H1 (cell line): ENCODE measurements at regions of chr1 and their contacts with region 1.

Region 1: GRCh38 chr1:201709564-201710295 is 119.2 kb upstream of the IPO9 start:
- DNase-seq: peak; percentile 50 to 92
- H3K4me3 ChIP-seq: no peak overlapping the region
- H3K27ac ChIP-seq: no peak overlapping the region
- H3K4me1 ChIP-seq: peaks cover 0 to 3% (median 2%) of the 10 kb centered on the region in 4 experiments; a peak in 4 of 7 replicates
- H3K27me3 ChIP-seq: no peaks in the 10 kb centered on the region
- CTCF ChIP-seq: peak; percentile 95 to 97 (median 97)
- EP300 ChIP-seq: no peak
- POLR2A ChIP-seq: no peak
- RAD21 ChIP-seq: peak; percentile 90 to 94

Region 2: DNA sequence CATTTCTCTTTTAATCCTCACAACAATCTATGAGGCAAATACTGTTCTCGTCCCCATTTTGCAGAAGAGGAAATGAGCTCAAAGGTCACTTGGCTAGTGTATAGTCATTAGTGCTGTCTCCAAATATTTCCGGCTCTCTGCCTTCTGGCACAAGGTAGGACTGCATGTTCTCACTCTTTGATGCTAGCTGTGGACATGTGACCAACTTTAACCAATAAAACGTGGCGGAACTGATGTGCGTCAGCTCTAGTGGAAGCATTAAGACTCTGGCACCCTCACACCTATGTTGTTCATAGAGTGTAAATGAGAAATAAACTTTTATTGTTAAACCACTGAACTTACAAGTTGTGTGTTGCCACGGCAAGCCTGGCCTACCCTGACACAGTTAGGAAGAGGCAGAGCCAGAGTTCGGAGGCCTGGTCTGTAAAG is 681.3 kb before region 1 on chr1:
- CTCF ChIA-PET with region 1: no interaction called
- POLR2A ChIA-PET with region 1: no interaction called
- DNase-seq: no peak
- H3K4me3 ChIP-seq: no peak overlapping the region
- H3K27ac ChIP-seq: no peak overlapping the region
- H3K4me1 ChIP-seq: peaks cover 5 to 18% (median 13%) of the 10 kb centered on the region in 4 experiments
- H3K27me3 ChIP-seq: no peaks in the 10 kb centered on the region
- CTCF ChIP-seq: no peak
- EP300 ChIP-seq: no peak
- POLR2A ChIP-seq: no peak
- RAD21 ChIP-seq: no peak

Region 3: DNA sequence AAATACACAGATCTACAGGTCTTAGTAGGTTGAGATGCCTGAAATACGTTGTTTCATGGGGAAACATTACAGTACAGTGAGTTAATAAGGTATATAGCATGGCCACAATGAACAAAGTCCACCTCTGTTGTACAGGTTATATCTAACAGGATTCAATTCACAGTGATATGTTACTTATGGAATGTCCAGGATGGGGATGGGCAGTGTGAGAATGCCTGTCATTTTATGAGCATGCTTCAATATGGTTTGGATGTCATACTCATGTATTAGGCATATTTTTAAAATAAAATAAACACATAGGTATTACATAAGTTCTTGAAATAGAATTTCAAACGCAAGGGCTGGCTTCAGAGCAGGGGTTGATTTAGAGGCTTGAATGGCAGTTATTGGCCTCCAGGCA is 234.6 kb before region 1 on chr1:
- CTCF ChIA-PET with region 1: no interaction called
- POLR2A ChIA-PET with region 1: no interaction called
- DNase-seq: no peak
- H3K4me3 ChIP-seq: no peak overlapping the region
- H3K27ac ChIP-seq: no peak overlapping the region
- H3K4me1 ChIP-seq: peaks cover 0 to 3% (median under 1%) of the 10 kb centered on the region in 4 experiments; a peak in 4 of 7 replicates
- H3K27me3 ChIP-seq: peaks cover 4 to 18% (median 15%) of the 10 kb centered on the region in 4 experiments; a peak in 6 of 7 replicates
- CTCF ChIP-seq: no peak
- EP300 ChIP-seq: no peak
- POLR2A ChIP-seq: no peak
- RAD21 ChIP-seq: no peak

Region 4: DNA sequence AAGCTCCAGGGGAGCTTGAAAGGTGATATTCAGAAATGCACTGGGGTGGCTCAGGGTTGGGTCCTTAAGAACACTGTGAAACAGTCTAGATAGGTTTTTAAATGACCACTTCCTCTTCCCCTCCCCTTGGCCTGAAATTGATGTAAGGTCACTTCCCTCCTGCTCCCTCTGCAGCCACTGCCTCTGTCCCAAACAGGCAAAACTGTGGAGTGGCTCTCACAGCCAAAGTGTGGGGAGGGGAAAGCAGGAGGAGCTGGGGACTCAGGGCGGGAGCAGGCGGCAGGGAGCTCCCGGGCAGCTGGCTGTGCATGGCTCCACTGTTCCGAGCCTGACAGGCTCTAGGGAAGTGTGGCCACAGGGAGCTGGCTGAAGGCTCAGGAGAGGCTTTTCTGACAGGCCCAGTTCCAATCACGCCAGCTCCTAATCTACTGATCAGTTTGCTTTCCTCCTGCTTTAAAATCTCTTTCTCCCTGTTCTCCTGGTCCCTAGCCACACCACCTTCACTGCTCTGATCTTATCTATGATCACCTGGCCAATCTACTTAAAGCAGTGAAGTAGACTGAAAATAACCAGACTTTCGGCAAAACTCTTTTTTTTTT is 197.7 kb before region 1 on chr1:
- CTCF ChIA-PET with region 1: interaction called, 25 read pairs
- POLR2A ChIA-PET with region 1: no interaction called
- DNase-seq: no peak
- H3K4me3 ChIP-seq: no peak overlapping the region
- H3K27ac ChIP-seq: no peak overlapping the region
- H3K4me1 ChIP-seq: peaks cover 3 to 5% (median 5%) of the 10 kb centered on the region in 4 experiments; a peak in 6 of 7 replicates
- H3K27me3 ChIP-seq: peaks cover under 1 to 18% (median 12%) of the 10 kb centered on the region in 4 experiments
- CTCF ChIP-seq: no peak
- EP300 ChIP-seq: no peak
- POLR2A ChIP-seq: no peak
- RAD21 ChIP-seq: no peak

Region 5: GRCh38 chr1:201619513-201619912 is 90.2 kb before region 1 on chr1:
- CTCF ChIA-PET with region 1: interaction called, 11 read pairs
- POLR2A ChIA-PET with region 1: no interaction called
- DNase-seq: no peak
- H3K4me3 ChIP-seq: no peak overlapping the region
- H3K27ac ChIP-seq: no peak overlapping the region
- H3K4me1 ChIP-seq: peaks cover 1 to 8% (median 5%) of the 10 kb centered on the region in 4 experiments; a peak in 4 of 7 replicates
- H3K27me3 ChIP-seq: no peaks in the 10 kb centered on the region
- CTCF ChIP-seq: no peak
- EP300 ChIP-seq: no peak
- POLR2A ChIP-seq: no peak
- RAD21 ChIP-seq: no peak

Region 6: DNA sequence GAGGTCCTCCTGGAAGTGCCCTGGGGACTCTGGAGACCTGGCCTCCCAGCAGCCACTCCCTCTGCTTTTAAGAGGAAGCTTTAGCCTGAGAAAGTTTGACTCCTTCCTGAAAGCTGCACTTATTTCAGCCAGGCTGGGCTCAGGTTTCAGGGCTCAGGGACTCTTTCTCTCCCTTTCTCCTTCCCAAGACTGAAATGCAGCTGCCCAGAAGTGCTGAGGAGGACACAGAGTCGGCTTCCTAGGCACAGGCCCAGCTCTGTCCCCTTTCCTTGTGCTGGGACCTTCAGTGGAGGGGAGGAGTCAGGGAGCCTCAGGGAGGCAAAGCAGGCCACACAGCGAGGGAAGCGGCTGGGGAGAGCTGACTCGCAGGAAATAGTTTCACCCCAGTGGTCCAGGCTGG is 33.5 kb before region 1 on chr1:
- CTCF ChIA-PET with region 1: interaction called, 14 read pairs
- POLR2A ChIA-PET with region 1: interaction called, 3 read pairs
- DNase-seq: no peak
- H3K4me3 ChIP-seq: no peak overlapping the region
- H3K27ac ChIP-seq: peak overlapping the region; percentile 64; the same call in 1 of the 2 replicates
- H3K4me1 ChIP-seq: peaks cover 7 to 35% (median 24%) of the 10 kb centered on the region in 4 experiments
- H3K27me3 ChIP-seq: no peaks in the 10 kb centered on the region
- CTCF ChIP-seq: no peak
- EP300 ChIP-seq: no peak
- POLR2A ChIP-seq: no peak
- RAD21 ChIP-seq: no peak

Region 7: GRCh38 chr1:201739492-201740085 is 29.9 kb after region 1 on chr1:
- CTCF ChIA-PET with region 1: interaction called, 216 read pairs
- POLR2A ChIA-PET with region 1: interaction called, 3 read pairs
- DNase-seq: peak in 1 of 2 experiments; percentile 77
- H3K4me3 ChIP-seq: peak overlapping the region; percentile 70 to 86 (median 84)
- H3K27ac ChIP-seq: no peak overlapping the region
- H3K4me1 ChIP-seq: peaks cover 37 to 49% (median 44%) of the 10 kb centered on the region in 4 experiments
- H3K27me3 ChIP-seq: no peaks in the 10 kb centered on the region
- CTCF ChIP-seq: no peak
- EP300 ChIP-seq: no peak
- POLR2A ChIP-seq: no peak
- RAD21 ChIP-seq: no peak; a peak in 1 of 4 replicates

Region 8: DNA sequence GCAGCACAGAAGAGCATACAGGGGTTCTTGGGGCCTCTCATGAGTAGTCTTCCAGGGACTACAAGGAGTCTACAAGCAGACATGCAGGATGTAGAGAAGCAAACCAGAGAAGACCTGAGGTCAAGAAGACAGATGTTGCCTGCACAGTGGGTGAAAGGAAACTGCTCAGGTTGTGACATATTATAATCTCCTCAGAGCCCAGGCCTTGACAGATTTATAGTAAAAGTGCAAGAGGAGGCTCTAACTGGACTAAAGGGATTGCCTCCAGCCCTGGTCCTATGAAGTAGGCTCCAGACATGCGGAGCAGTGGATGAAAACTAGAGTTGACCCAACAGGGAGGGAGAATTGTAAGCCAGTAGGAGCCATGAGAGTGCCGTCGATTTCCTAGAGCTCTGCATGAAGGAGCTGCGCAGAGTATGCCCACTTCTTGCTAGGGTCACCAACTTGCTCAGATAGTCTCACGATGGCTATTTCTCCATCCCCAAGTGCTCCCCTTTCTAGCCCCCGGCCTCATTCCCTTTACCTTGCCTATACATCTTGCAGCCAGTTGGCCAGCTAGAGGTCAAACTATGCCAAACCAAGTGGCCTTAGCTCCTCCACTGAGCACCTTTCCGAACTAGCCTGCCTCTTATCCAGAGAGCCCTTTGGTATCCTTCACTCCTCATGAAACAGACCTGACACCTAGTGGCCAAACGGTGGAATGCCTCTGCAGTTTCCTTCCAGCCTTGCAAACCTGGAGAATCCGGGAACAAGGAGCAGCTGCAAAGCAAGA is 83.0 kb after region 1 on chr1:
- CTCF ChIA-PET with region 1: interaction called, 823 read pairs
- POLR2A ChIA-PET with region 1: interaction called, 3 read pairs
- DNase-seq: peak; percentile 71 to 87
- H3K4me3 ChIP-seq: no peak overlapping the region
- H3K27ac ChIP-seq: no peak overlapping the region
- H3K4me1 ChIP-seq: no peaks in the 10 kb centered on the region
- H3K27me3 ChIP-seq: no peaks in the 10 kb centered on the region
- CTCF ChIP-seq: peak; percentile 80 to 99 (median 96)
- EP300 ChIP-seq: no peak
- POLR2A ChIP-seq: no peak
- RAD21 ChIP-seq: peak; percentile 99 to 100